HepG2 (cell line): ENCODE measurements at regions of chr11 and their contacts with region 1.

Region 1: DNA sequence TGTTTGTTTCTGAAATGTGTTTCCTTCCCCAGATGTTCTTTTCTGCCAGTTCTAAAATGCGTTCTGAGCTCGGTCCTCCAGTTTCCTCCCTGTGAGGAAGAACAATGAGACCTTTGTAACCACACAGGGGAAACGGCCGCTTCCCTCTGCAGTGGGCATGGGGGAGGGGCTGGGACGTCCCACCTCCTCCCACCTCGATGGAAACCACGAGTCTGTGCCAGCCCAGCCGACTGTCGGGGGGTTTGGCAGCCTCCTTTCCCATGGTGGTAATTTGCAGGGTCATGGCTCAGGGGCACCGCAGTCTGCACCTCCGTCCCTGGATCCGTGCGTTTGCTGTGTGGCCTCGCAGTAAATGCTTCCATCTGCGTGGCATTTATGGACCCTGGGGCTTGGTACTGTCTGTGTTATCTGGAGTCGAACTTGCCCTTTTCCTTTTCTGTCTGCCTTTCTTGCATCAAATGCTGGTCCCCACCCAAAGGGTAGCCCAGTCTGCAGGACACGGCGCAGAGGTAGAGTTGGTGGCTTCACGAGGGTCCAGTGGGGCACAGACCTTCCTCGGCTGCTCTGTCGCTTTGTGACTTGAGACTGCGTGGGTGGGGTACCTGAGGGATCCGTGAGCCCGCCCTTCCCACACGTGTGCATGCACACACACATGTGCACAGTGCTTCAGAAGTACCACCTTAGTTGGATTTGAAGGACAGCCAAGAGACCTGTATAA is 16.1 kb downstream of the LRP5 start:
- DNase-seq: peak; percentile 86
- ATAC-seq: peak; percentile 44
- H3K4me3 ChIP-seq: peak overlapping the region in 1 of 3 experiments; percentile 27; a peak in 1 of 6 replicates
- H3K27ac ChIP-seq: peak overlapping the region; percentile 82
- H3K4me1 ChIP-seq: peaks cover 100% of the 10 kb centered on the region
- H3K27me3 ChIP-seq: no peaks in the 10 kb centered on the region
- CTCF ChIP-seq: no peak
- EP300 ChIP-seq: peak in 1 of 2 experiments; percentile 52; a peak in 1 of 4 replicates
- POLR2A ChIP-seq: no peak
- RAD21 ChIP-seq: no peak

Region 2: GRCh38 chr11:68282141-68282970 is 46.2 kb before region 1 on chr11:
- CTCF ChIA-PET with region 1: no interaction called
- POLR2A ChIA-PET with region 1: no interaction called
- in situ Hi-C with region 1: no loop called
- intact Hi-C with region 1: no loop called
- DNase-seq: no peak
- ATAC-seq: no peak
- H3K4me3 ChIP-seq: no peak overlapping the region; a peak in 1 of 6 replicates
- H3K27ac ChIP-seq: no peak overlapping the region
- H3K4me1 ChIP-seq: peaks cover 14% of the 10 kb centered on the region
- H3K27me3 ChIP-seq: no peaks in the 10 kb centered on the region
- CTCF ChIP-seq: no peak
- EP300 ChIP-seq: no peak
- POLR2A ChIP-seq: no peak
- RAD21 ChIP-seq: no peak

Region 3: GRCh38 chr11:68383976-68384501 is 55.5 kb after region 1 on chr11:
- CTCF ChIA-PET with region 1: no interaction called
- POLR2A ChIA-PET with region 1: interaction called, 11 read pairs
- in situ Hi-C with region 1: no loop called
- intact Hi-C with region 1: no loop called
- DNase-seq: peak; percentile 43
- ATAC-seq: no peak
- H3K4me3 ChIP-seq: no peak overlapping the region
- H3K27ac ChIP-seq: no peak overlapping the region
- H3K4me1 ChIP-seq: peaks cover 46% of the 10 kb centered on the region
- H3K27me3 ChIP-seq: no peaks in the 10 kb centered on the region
- CTCF ChIP-seq: peak; percentile 89
- EP300 ChIP-seq: no peak
- POLR2A ChIP-seq: 0 out of 4 replicates have a peak, but pooled peaks of 1 of the 2 experiments have one; percentile 12
- RAD21 ChIP-seq: peak; percentile 91

Region 4: GRCh38 chr11:68480852-68481510 is 152.4 kb after region 1 on chr11:
- CTCF ChIA-PET with region 1: no interaction called
- POLR2A ChIA-PET with region 1: no interaction called
- in situ Hi-C with region 1: no loop called
- intact Hi-C with region 1: no loop called
- DNase-seq: no peak
- ATAC-seq: no peak; the same call in 2 of the 3 replicates
- H3K4me3 ChIP-seq: no peak overlapping the region
- H3K27ac ChIP-seq: no peak overlapping the region
- H3K4me1 ChIP-seq: peaks cover 43% of the 10 kb centered on the region
- H3K27me3 ChIP-seq: no peaks in the 10 kb centered on the region
- CTCF ChIP-seq: no peak
- EP300 ChIP-seq: no peak
- POLR2A ChIP-seq: no peak
- RAD21 ChIP-seq: no peak